ENCODE measurements at regions of chr11 and their contacts with region 1.

Region 1: GRCh38 chr11:57480409-57481137 is 20.2 kb downstream of the RTN4RL2 start:
- DNase-seq: peak in 8 of 9 experiments; percentile 43 to 74 (median 65)
- ATAC-seq: peak; percentile 51
- H3K4me3 ChIP-seq: no peak overlapping the region
- H3K4me3 Mint-ChIP-seq: no peak overlapping the region
- H3K27ac ChIP-seq: no peak overlapping the region
- H3K27ac Mint-ChIP-seq: no peak overlapping the region
- H3K4me1 ChIP-seq: peaks cover 14% of the 10 kb centered on the region
- H3K4me1 Mint-ChIP-seq: peaks cover 26% of the 10 kb centered on the region
- H3K27me3 ChIP-seq: peaks cover 4 to 10% of the 10 kb centered on the region in 2 experiments
- H3K27me3 Mint-ChIP-seq: peaks cover 10% of the 10 kb centered on the region
- CTCF ChIP-seq: peak; percentile 56

Region 2: DNA sequence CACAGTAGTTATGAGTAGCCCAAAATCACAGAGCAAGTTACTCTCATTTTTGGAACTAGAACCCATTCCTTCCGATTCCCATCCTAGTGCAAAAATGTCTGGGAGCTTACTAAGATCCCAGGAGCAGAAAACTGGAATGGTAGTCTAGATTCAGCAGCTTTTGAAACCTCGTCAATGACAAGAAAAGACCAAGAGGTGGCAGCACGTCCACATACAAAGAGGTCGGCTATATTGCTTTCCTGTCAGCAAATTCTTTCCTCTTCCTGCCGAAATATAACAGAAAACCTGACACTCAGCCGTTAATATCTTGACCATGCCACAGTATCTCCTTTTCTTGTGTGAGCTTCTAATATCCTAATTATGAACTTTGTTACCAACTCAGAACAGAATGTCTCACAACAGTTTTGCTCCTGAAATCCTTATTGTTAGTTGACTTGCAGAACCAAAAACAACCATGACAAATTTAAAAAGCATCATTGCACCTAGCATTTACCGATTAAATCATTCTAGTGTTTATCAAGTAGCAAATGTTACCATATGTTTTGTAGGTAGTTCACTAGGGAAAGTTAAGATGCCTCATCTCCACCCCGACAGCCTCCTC is 639.3 kb before region 1 on chr11:
- CTCF ChIA-PET with region 1: no interaction called
- POLR2A ChIA-PET with region 1: no interaction called
- intact Hi-C with region 1: loop called in 1 of 2 experiments (anchors 10 kb)
- DNase-seq: peak in 3 of 9 experiments; percentile 18 to 39 (median 18)
- ATAC-seq: no peak
- H3K4me3 ChIP-seq: no peak overlapping the region
- H3K4me3 Mint-ChIP-seq: no peak overlapping the region
- H3K27ac ChIP-seq: no peak overlapping the region
- H3K27ac Mint-ChIP-seq: no peak overlapping the region
- H3K4me1 ChIP-seq: no peaks in the 10 kb centered on the region
- H3K4me1 Mint-ChIP-seq: no peaks in the 10 kb centered on the region
- H3K27me3 ChIP-seq: no peaks in the 10 kb centered on the region
- H3K27me3 Mint-ChIP-seq: peaks cover 5% of the 10 kb centered on the region
- CTCF ChIP-seq: peak; percentile 25

Region 3: GRCh38 chr11:57499413-57499982 is 18.9 kb after region 1 on chr11:
- CTCF ChIA-PET with region 1: interaction called, 129 read pairs
- POLR2A ChIA-PET with region 1: no interaction called
- intact Hi-C with region 1: no loop called
- DNase-seq: peak in 3 of 9 experiments; percentile 20 to 37 (median 25)
- ATAC-seq: no peak
- H3K4me3 ChIP-seq: no peak overlapping the region
- H3K4me3 Mint-ChIP-seq: no peak overlapping the region
- H3K27ac ChIP-seq: no peak overlapping the region
- H3K27ac Mint-ChIP-seq: no peak overlapping the region
- H3K4me1 ChIP-seq: no peaks in the 10 kb centered on the region
- H3K4me1 Mint-ChIP-seq: peaks cover 5% of the 10 kb centered on the region
- H3K27me3 ChIP-seq: no peaks in the 10 kb centered on the region
- H3K27me3 Mint-ChIP-seq: no peaks in the 10 kb centered on the region
- CTCF ChIP-seq: no peak

Region 4: GRCh38 chr11:57815476-57815875 is 334.9 kb after region 1 on chr11:
- CTCF ChIA-PET with region 1: no interaction called
- POLR2A ChIA-PET with region 1: no interaction called
- intact Hi-C with region 1: no loop called
- DNase-seq: no peak
- ATAC-seq: no peak
- H3K4me3 ChIP-seq: no peak overlapping the region
- H3K4me3 Mint-ChIP-seq: no peak overlapping the region
- H3K27ac ChIP-seq: no peak overlapping the region
- H3K27ac Mint-ChIP-seq: no peak overlapping the region
- H3K4me1 ChIP-seq: no peaks in the 10 kb centered on the region
- H3K4me1 Mint-ChIP-seq: no peaks in the 10 kb centered on the region
- H3K27me3 ChIP-seq: no peaks in the 10 kb centered on the region
- H3K27me3 Mint-ChIP-seq: no peaks in the 10 kb centered on the region
- CTCF ChIP-seq: no peak